CD8-positive, alpha-beta T cell (primary cell): ENCODE measurements at regions of chr7 and their contacts with region 1.

Region 1: GRCh38 chr7:134646425-134647305 is at the start of gene BPGM:
- DNase-seq: peak; percentile 93 to 100 (median 96)
- ATAC-seq: peak; percentile 92
- H3K4me3 ChIP-seq: peak within 1 kb of the TSS; percentile 69 to 81
- H3K4me3 Mint-ChIP-seq: no peak within 1 kb of the TSS
- H3K27ac ChIP-seq: peak within 1 kb of the TSS; percentile 84 to 89
- H3K27ac Mint-ChIP-seq: no peak within 1 kb of the TSS
- H3K4me1 ChIP-seq: peaks cover 22% of the 10 kb centered on the region
- H3K4me1 Mint-ChIP-seq: peaks cover 28% of the 10 kb centered on the region
- H3K27me3 ChIP-seq: no peaks in the 10 kb centered on the region
- H3K27me3 Mint-ChIP-seq: no peaks in the 10 kb centered on the region
- CTCF ChIP-seq: peak; percentile 26
- total RNA-seq, gene BPGM: 30.3 to 31.4 TPM

Region 2: DNA sequence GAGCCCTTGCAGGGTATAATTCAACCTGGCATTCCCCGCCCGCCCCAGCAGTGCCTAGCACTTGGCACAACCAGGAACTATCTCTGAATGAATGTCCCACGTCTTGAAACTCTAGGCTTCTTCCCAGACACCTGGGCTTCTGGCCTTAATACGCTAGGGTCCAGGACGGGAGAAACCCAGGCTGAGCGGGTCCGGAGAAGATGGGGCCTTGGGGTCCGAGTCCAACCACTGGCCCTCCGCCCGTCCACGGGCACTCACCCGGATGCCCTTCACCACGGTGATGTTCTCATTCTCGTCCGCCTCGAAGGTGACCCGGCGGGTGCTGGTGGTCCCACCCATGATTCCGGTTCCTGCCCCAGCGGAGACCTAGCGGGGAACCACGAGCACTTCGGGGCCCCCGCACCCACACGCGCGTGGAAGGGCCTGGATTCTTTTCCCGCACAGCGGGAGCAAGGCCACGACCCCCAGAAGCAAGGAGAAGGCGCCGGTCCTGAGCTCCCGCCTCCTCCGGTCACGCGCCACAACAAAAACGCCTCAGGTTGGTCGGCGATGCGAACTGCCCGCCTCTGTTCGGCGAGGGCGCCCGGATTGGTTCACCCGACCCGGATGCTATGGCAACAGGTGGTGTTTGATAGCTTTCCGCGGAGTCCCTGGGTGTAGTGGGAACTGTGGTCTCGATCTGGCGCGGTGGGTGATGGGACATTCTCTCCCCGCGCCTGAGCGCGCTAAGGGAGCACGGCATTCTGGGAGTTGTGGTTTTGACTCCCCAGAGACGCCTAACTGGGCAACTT is 1564.9 kb before region 1 on chr7 and contains the start of gene CHCHD3:
- CTCF ChIA-PET with region 1: no interaction called
- POLR2A ChIA-PET with region 1: no interaction called
- intact Hi-C with region 1: loop called in 1 of 2 experiments (anchors 5 kb)
- DNase-seq: peak; percentile 88 to 98 (median 96)
- ATAC-seq: peak; percentile 98
- H3K4me3 ChIP-seq: peak within 1 kb of the TSS; percentile 94 to 96
- H3K4me3 Mint-ChIP-seq: peak within 1 kb of the TSS; percentile 92
- H3K27ac ChIP-seq: peak within 1 kb of the TSS; percentile 92 to 94
- H3K27ac Mint-ChIP-seq: peak within 1 kb of the TSS; percentile 96
- H3K4me1 ChIP-seq: peaks cover 16% of the 10 kb centered on the region
- H3K4me1 Mint-ChIP-seq: peaks cover 33% of the 10 kb centered on the region
- H3K27me3 ChIP-seq: no peaks in the 10 kb centered on the region
- H3K27me3 Mint-ChIP-seq: peaks cover 3% of the 10 kb centered on the region
- CTCF ChIP-seq: no peak
- total RNA-seq, gene CHCHD3: 19.0 to 20.4 TPM

Region 3: DNA sequence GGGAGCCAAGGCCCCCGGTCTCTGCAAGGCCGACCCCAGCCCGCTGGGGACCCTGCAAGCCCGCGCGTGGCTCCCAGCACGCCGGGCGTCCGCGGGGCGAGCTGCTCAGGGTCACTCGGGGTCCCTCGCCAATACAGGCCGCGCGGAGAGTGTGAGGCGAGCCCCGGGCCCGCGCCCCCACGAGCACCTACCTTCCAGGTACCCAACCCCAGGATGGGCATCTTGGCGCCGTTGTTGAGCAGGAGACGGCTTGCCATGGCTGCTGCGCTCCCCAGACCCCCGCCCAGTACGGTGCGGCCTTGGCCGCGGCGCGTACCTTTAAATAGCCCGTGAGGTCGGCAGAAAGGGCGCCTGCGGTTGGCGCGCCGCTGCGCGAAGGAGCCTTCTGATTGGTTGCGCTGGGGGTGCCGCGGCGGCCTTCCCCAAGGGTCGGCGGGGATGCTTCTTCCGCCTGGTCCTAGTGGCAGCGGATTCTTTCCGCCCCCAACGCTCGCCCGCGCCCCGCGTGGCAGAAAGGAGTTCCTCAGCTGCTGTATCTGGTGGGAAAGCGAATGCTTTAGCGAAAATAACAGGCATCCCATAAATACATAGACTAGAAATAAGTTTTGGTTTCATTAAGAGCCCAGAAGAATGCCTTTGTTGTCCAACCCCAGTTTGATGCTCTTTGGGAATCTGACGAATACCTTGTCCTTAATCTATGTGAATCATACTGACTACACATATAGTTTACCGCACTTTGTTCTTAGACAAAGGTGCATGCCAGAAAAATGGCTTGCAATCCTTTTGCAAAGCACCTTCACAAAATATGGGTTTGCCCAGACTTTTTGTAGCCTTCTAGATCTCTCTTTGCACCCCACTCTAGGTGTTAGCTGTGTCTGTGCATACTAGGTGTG is 187.6 kb before region 1 on chr7 and contains the start of gene AKR1B1:
- CTCF ChIA-PET with region 1: no interaction called
- POLR2A ChIA-PET with region 1: no interaction called
- intact Hi-C with region 1: loop called in 1 of 2 experiments (anchors 1 kb)
- DNase-seq: peak; percentile 75 to 93 (median 87)
- ATAC-seq: peak; percentile 88
- H3K4me3 ChIP-seq: peak within 1 kb of the TSS; percentile 75 to 85
- H3K4me3 Mint-ChIP-seq: peak within 1 kb of the TSS; percentile 83
- H3K27ac ChIP-seq: peak within 1 kb of the TSS; percentile 63 to 74
- H3K27ac Mint-ChIP-seq: peak within 1 kb of the TSS; percentile 76
- H3K4me1 ChIP-seq: peaks cover 36% of the 10 kb centered on the region
- H3K4me1 Mint-ChIP-seq: peaks cover 47% of the 10 kb centered on the region
- H3K27me3 ChIP-seq: no peaks in the 10 kb centered on the region
- H3K27me3 Mint-ChIP-seq: no peaks in the 10 kb centered on the region
- CTCF ChIP-seq: peak; percentile 72
- total RNA-seq, gene AKR1B1: 63.9 to 67.6 TPM

Region 4: DNA sequence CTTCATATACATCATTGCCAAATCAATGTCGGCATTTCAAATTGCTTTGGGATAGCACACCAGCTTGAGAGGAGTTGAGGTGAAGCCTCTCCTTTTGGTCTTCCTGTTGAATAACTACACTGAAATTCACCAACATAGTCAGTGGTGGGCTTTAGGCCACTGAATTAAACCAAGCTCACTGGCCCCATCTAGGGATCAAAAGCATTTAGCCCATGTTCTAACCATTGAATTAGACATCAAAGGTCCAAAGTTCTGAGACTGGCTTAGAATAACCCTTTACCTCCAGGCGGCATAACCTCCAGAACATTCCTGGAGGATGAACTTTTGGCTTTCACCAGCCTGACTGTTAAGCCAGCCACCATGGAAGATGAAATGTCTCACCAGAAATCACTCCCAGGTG is 54.6 kb after region 1 on chr7:
- CTCF ChIA-PET with region 1: interaction called, 16 read pairs
- POLR2A ChIA-PET with region 1: interaction called, 15 read pairs
- intact Hi-C with region 1: loop called in 1 of 2 experiments (anchors 1 kb)
- DNase-seq: peak in 7 of 9 experiments; percentile 4 to 67 (median 38)
- ATAC-seq: peak; percentile 62
- H3K4me3 ChIP-seq: no peak overlapping the region
- H3K4me3 Mint-ChIP-seq: no peak overlapping the region
- H3K27ac ChIP-seq: no peak overlapping the region
- H3K27ac Mint-ChIP-seq: no peak overlapping the region
- H3K4me1 ChIP-seq: no peaks in the 10 kb centered on the region
- H3K4me1 Mint-ChIP-seq: no peaks in the 10 kb centered on the region
- H3K27me3 ChIP-seq: no peaks in the 10 kb centered on the region
- H3K27me3 Mint-ChIP-seq: no peaks in the 10 kb centered on the region
- CTCF ChIP-seq: peak; percentile 32

Region 5: GRCh38 chr7:135170274-135170997 is 523.8 kb after region 1 on chr7 and contains the start of gene CYREN:
- CTCF ChIA-PET with region 1: interaction called, 6 read pairs
- POLR2A ChIA-PET with region 1: interaction called, 7 read pairs
- intact Hi-C with region 1: loop called in 1 of 2 experiments (anchors 1 kb)
- DNase-seq: peak; percentile 75 to 95 (median 91)
- ATAC-seq: peak; percentile 75
- H3K4me3 ChIP-seq: peak within 1 kb of the TSS; percentile 89 to 92
- H3K4me3 Mint-ChIP-seq: peak within 1 kb of the TSS; percentile 84
- H3K27ac ChIP-seq: peak within 1 kb of the TSS; percentile 94 to 98
- H3K27ac Mint-ChIP-seq: peak within 1 kb of the TSS; percentile 97
- H3K4me1 ChIP-seq: peaks cover 38% of the 10 kb centered on the region
- H3K4me1 Mint-ChIP-seq: peaks cover 47% of the 10 kb centered on the region
- H3K27me3 ChIP-seq: no peaks in the 10 kb centered on the region
- H3K27me3 Mint-ChIP-seq: no peaks in the 10 kb centered on the region
- CTCF ChIP-seq: peak; percentile 71
- total RNA-seq, gene CYREN: 14.0 to 15.2 TPM

Region 6: GRCh38 chr7:135558337-135558767 is 911.7 kb after region 1 on chr7:
- CTCF ChIA-PET with region 1: no interaction called
- POLR2A ChIA-PET with region 1: no interaction called
- intact Hi-C with region 1: loop called (anchors 2 to 5 kb)
- DNase-seq: peak; percentile 37 to 87 (median 68)
- ATAC-seq: peak; percentile 52
- H3K4me3 ChIP-seq: peak overlapping the region; percentile 85 to 86
- H3K4me3 Mint-ChIP-seq: no peak overlapping the region
- H3K27ac ChIP-seq: peak overlapping the region; percentile 90 to 98
- H3K27ac Mint-ChIP-seq: no peak overlapping the region
- H3K4me1 ChIP-seq: peaks cover 16% of the 10 kb centered on the region
- H3K4me1 Mint-ChIP-seq: peaks cover 17% of the 10 kb centered on the region
- H3K27me3 ChIP-seq: no peaks in the 10 kb centered on the region
- H3K27me3 Mint-ChIP-seq: no peaks in the 10 kb centered on the region
- CTCF ChIP-seq: peak; percentile 52